ENCODE measurements at regions of chrX and their contacts with region 1.

Region 1: DNA sequence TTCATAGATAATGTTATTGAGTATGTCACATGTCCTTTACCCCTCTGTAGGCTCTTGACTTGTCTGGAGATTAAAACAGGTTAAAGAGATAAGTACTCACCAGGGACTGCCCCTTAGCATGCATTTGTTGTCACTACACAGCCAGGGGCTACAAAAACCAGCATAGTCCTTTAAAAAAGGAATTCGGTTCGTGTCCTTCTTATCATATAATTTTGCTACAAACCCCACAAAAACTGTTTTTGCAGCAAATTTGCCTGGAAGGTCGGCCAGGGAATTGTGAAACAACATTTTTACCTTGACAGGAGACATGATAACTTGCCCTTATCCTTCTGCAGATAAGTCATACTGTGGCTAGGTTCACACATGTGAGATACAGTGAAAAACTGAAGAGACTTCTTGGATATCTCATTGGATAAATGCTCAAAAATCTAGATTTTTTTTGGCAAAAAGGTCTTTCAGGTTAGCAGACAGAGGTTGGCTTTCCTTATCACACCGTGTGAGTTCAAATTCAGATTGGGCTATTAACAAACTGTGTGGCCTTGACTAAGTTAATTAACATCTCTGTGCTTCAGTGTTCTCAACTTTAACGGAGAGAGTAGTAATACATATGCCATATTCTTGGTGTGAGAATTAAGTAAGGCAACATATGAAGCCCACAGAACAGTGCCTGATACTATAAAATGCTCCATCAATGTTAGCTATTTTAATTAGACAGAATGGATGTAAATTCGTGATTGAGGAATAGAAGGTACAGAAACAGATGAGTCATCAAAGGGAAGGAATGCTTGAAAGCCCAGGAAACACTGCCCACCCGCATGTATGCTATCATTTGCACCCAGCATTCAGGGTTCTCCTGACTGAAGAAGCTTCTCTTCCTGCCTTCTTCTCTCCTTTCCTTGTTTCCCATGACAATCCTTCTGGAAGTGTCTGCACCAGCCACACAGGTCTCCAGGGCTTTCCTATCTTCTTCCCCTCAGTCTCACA is 30.0 kb downstream of the FAM9C start:
- DNase-seq: no peak
- H3K4me3 ChIP-seq: no peak overlapping the region
- H3K27ac ChIP-seq: no peak overlapping the region
- H3K4me1 ChIP-seq: peaks cover 29% of the 10 kb centered on the region
- H3K27me3 ChIP-seq: no peaks in the 10 kb centered on the region
- CTCF ChIP-seq: no peak

Region 2: GRCh38 chrX:12967711-12968465 is 46.5 kb before region 1 on chrX:
- CTCF ChIA-PET with region 1: no interaction called
- dilution Hi-C with region 1: loop called (anchors 5 kb)
- in situ Hi-C with region 1: no loop called
- intact Hi-C with region 1: no loop called
- DNase-seq: no peak
- H3K4me3 ChIP-seq: no peak overlapping the region
- H3K27ac ChIP-seq: no peak overlapping the region
- H3K4me1 ChIP-seq: no peaks in the 10 kb centered on the region
- H3K27me3 ChIP-seq: no peaks in the 10 kb centered on the region
- CTCF ChIP-seq: no peak

Region 3: GRCh38 chrX:13087322-13088155 is 73.1 kb after region 1 on chrX:
- CTCF ChIA-PET with region 1: no interaction called
- dilution Hi-C with region 1: loop called (anchors 5 kb)
- in situ Hi-C with region 1: no loop called
- intact Hi-C with region 1: no loop called
- DNase-seq: peak; percentile 95
- H3K4me3 ChIP-seq: no peak overlapping the region
- H3K27ac ChIP-seq: peak overlapping the region; percentile 72
- H3K4me1 ChIP-seq: peaks cover 9% of the 10 kb centered on the region
- H3K27me3 ChIP-seq: no peaks in the 10 kb centered on the region
- CTCF ChIP-seq: no peak